ENCODE measurements at regions of chr15 and their contacts with region 1.

Region 1: GRCh38 chr15:77419836-77420609 is at the start of gene PEAK1:
- DNase-seq: peak; percentile 100
- ATAC-seq: peak; percentile 98
- H3K4me3 Mint-ChIP-seq: peak within 1 kb of the TSS; percentile 99
- H3K27ac Mint-ChIP-seq: peak within 1 kb of the TSS; percentile 99
- H3K4me1 Mint-ChIP-seq: peaks cover 41% of the 10 kb centered on the region
- H3K27me3 Mint-ChIP-seq: peaks cover 2% of the 10 kb centered on the region
- total RNA-seq, gene PEAK1: 29.1 to 33.0 TPM

Region 2: GRCh38 chr15:77398927-77399326 is 21.1 kb before region 1 on chr15:
- CTCF ChIA-PET with region 1: no interaction called
- DNase-seq: no peak
- ATAC-seq: no peak
- H3K4me3 Mint-ChIP-seq: no peak overlapping the region
- H3K27ac Mint-ChIP-seq: no peak overlapping the region
- H3K4me1 Mint-ChIP-seq: peaks cover 10% of the 10 kb centered on the region
- H3K27me3 Mint-ChIP-seq: no peaks in the 10 kb centered on the region

Region 3: GRCh38 chr15:77430213-77430612 is 10.2 kb after region 1 on chr15:
- CTCF ChIA-PET with region 1: interaction called, 16 read pairs
- DNase-seq: no peak
- ATAC-seq: peak; percentile 86
- H3K4me3 Mint-ChIP-seq: peak overlapping the region; percentile 7
- H3K27ac Mint-ChIP-seq: peak overlapping the region; percentile 30
- H3K4me1 Mint-ChIP-seq: peaks cover 39% of the 10 kb centered on the region
- H3K27me3 Mint-ChIP-seq: no peaks in the 10 kb centered on the region